Transverse colon (tissue), 4 donors: ENCODE measurements at regions of chr12 and their contacts with region 1.

Region 1: GRCh38 chr12:52980693-52981423 is 25.4 kb upstream of the EIF4B start:
- DNase-seq: peak; percentile 93
- H3K4me3 ChIP-seq: no peak overlapping the region
- H3K27ac ChIP-seq: peak overlapping the region in 2 of 4 donors; percentile 4 to 51
- H3K4me1 ChIP-seq: peaks cover 0 to 6% (median 0%) of the 10 kb centered on the region in 4 donors
- H3K27me3 ChIP-seq: no peaks in the 10 kb centered on the region
- CTCF ChIP-seq: peak; percentile 91 to 100 (median 95)
- EP300 ChIP-seq: no peak
- POLR2A ChIP-seq: no peak

Region 2: DNA sequence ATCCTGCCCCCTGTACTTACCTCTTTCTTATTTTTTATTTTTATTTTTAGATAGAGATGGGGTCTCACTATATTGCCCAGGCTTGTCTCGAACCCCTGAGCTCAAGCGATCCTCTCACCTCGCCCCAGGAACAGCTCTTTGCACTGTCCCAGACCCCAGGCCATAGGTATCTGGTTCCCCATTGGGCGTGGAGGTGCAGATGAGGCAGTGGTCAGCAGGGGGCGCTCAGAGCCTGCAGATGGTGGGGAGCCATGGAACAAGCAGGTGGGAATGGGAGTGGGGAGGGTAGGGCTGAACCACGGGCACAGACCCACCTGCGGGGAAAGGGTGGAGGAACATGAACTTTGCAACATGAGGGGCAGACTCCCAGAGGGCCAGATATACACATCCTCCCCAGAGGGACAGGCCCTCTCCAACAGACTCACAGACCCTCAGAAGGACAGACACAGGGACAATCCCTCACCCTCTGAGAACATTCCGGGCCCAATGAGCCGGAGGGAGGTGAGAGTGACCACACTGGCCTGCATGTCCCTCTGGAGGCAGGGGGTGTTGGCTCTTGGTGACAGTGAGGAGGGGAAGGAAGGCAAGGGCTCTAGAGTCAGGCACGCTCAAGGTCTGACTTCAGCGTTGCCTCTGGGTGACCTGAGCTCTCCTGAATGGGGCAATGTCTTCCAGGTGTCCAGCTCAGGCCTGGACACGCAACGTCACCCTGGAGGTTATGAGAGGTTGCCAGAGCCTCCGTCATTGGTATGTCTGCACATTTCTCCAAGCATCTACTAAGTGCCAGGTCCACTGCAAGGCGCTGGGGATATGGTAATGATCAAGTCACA is 823.9 kb before region 1 on chr12:
- in situ Hi-C with region 1: loop called in 1 of 4 experiments (anchors 10 kb)
- intact Hi-C with region 1: no loop called
- DNase-seq: peak; percentile 83
- H3K4me3 ChIP-seq: no peak overlapping the region
- H3K27ac ChIP-seq: no peak overlapping the region
- H3K4me1 ChIP-seq: peaks cover 6 to 19% (median 13%) of the 10 kb centered on the region in 4 donors
- H3K27me3 ChIP-seq: peaks cover 4% of the 10 kb centered on the region
- CTCF ChIP-seq: peak; percentile 91 to 95 (median 93)
- EP300 ChIP-seq: no peak
- POLR2A ChIP-seq: no peak

Region 3: DNA sequence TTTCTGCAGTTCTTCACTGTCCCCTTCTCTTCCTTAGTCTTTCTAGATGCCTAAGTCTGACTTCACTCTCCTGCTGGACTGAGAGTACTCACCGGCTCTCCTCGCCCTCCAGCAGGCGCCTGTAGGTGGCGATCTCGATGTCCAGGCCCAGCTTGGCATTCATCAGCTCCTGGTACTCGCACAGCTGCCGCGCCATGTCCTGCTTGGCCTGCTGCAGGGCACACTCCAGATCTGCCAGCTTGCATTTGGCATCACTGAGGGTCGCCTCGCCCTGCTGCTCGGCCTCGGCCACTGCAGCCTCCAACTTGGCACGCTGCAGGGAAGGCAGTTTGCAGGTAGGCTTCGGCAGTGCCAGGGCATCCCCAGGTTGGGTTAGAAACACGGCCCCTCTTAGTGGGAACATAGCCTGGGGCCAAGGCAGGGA is 600.6 kb before region 1 on chr12:
- in situ Hi-C with region 1: loop called in 3 of 4 experiments (anchors 25 kb)
- intact Hi-C with region 1: no loop called
- DNase-seq: peak; percentile 44
- H3K4me3 ChIP-seq: no peak overlapping the region
- H3K27ac ChIP-seq: no peak overlapping the region
- H3K4me1 ChIP-seq: no peaks in the 10 kb centered on the region
- H3K27me3 ChIP-seq: no peaks in the 10 kb centered on the region
- CTCF ChIP-seq: peak in 4 of 5 experiments; percentile 28 to 53 (median 47)
- EP300 ChIP-seq: no peak
- POLR2A ChIP-seq: no peak

Region 4: DNA sequence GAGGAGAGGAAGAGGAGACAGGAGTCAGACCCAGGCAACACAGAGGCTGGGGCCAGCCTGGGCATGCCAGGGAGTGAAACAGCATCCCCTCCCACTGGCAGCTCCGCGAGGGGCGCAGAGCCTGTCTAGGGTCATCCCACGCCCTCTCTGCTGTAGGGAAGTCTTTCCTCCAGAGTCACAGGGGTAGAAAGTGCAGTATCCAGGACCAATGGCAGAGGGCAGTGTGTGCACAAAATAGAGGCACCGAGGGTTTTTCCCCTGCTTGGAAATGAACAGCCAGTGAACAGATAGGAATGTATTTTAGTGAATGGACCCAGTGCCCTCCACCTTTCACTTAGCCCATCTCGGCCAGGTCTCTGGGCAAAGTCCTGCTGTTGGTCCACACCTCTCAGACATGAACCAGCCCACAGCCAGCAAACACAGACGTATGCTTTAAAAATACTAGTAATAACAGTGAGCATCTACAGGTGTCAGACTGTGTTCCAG is 397.8 kb before region 1 on chr12:
- in situ Hi-C with region 1: loop called (anchors 10 to 25 kb)
- intact Hi-C with region 1: no loop called
- DNase-seq: peak; percentile 63
- H3K4me3 ChIP-seq: no peak overlapping the region
- H3K27ac ChIP-seq: no peak overlapping the region
- H3K4me1 ChIP-seq: no peaks in the 10 kb centered on the region
- H3K27me3 ChIP-seq: no peaks in the 10 kb centered on the region
- CTCF ChIP-seq: peak; percentile 50 to 83 (median 69)
- EP300 ChIP-seq: no peak
- POLR2A ChIP-seq: no peak

Region 5: GRCh38 chr12:52884526-52885293 is 96.1 kb before region 1 on chr12:
- in situ Hi-C with region 1: loop called (anchors 5 kb)
- intact Hi-C with region 1: loop called (anchors 2 kb)
- DNase-seq: peak; percentile 87
- H3K4me3 ChIP-seq: no peak overlapping the region
- H3K27ac ChIP-seq: peak overlapping the region in 2 of 4 donors; percentile 30 to 45
- H3K4me1 ChIP-seq: peaks cover 2 to 21% (median 7%) of the 10 kb centered on the region in 4 donors
- H3K27me3 ChIP-seq: peaks cover 6% of the 10 kb centered on the region
- CTCF ChIP-seq: peak; percentile 90 to 98 (median 95)
- EP300 ChIP-seq: no peak
- POLR2A ChIP-seq: no peak

Region 6: GRCh38 chr12:52929538-52929937 is 51.3 kb before region 1 on chr12:
- in situ Hi-C with region 1: no loop called
- intact Hi-C with region 1: no loop called
- DNase-seq: no peak
- H3K4me3 ChIP-seq: no peak overlapping the region
- H3K27ac ChIP-seq: no peak overlapping the region
- H3K4me1 ChIP-seq: peaks cover 13 to 37% (median 33%) of the 10 kb centered on the region in 4 donors
- H3K27me3 ChIP-seq: no peaks in the 10 kb centered on the region
- CTCF ChIP-seq: no peak
- EP300 ChIP-seq: no peak
- POLR2A ChIP-seq: no peak

Region 7: GRCh38 chr12:52949413-52950331 is 31.2 kb before region 1 on chr12:
- in situ Hi-C with region 1: no loop called
- intact Hi-C with region 1: no loop called
- DNase-seq: peak; percentile 85
- H3K4me3 ChIP-seq: peak overlapping the region; percentile 40 to 86 (median 61)
- H3K27ac ChIP-seq: peak overlapping the region; percentile 87 to 96 (median 91)
- H3K4me1 ChIP-seq: peaks cover 8 to 32% (median 17%) of the 10 kb centered on the region in 4 donors
- H3K27me3 ChIP-seq: no peaks in the 10 kb centered on the region
- CTCF ChIP-seq: peak in 1 of 5 experiments; percentile 50
- EP300 ChIP-seq: peak; percentile 3
- POLR2A ChIP-seq: peak; percentile 95

Region 8: DNA sequence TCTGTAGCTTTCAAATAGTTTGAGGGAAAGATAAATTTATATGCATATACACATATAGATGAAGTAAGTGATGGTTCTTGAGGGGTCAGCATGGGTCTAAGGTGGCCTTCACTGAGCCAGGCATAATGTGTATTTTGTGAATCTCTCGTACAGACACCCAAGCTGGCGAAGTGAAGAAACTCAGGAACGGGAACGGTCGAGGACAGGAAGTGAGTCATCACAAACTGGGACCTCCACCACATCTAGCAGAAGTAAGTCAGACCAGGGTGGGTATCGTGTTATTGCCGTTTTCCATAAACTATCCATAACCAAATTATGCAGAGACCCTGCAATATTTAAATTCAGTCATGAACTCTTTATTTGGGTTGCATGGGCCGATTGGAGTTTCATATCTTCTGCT is 53.6 kb after region 1 on chr12:
- in situ Hi-C with region 1: no loop called
- intact Hi-C with region 1: no loop called
- DNase-seq: no peak
- H3K4me3 ChIP-seq: no peak overlapping the region
- H3K27ac ChIP-seq: no peak overlapping the region
- H3K4me1 ChIP-seq: peaks cover 0 to 20% (median 6%) of the 10 kb centered on the region in 4 donors
- H3K27me3 ChIP-seq: no peaks in the 10 kb centered on the region
- CTCF ChIP-seq: no peak
- EP300 ChIP-seq: no peak
- POLR2A ChIP-seq: no peak